ENCODE measurements at regions of chr3 and their contacts with region 1.

Region 1: GRCh38 chr3:185558395-185558794 is 6.0 kb upstream of the LIPH start:
- DNase-seq: no peak
- ATAC-seq: no peak
- H3K4me3 ChIP-seq: no peak overlapping the region
- H3K27ac ChIP-seq: no peak overlapping the region
- H3K4me1 ChIP-seq: no peaks in the 10 kb centered on the region
- H3K27me3 ChIP-seq: no peaks in the 10 kb centered on the region

Region 2: DNA sequence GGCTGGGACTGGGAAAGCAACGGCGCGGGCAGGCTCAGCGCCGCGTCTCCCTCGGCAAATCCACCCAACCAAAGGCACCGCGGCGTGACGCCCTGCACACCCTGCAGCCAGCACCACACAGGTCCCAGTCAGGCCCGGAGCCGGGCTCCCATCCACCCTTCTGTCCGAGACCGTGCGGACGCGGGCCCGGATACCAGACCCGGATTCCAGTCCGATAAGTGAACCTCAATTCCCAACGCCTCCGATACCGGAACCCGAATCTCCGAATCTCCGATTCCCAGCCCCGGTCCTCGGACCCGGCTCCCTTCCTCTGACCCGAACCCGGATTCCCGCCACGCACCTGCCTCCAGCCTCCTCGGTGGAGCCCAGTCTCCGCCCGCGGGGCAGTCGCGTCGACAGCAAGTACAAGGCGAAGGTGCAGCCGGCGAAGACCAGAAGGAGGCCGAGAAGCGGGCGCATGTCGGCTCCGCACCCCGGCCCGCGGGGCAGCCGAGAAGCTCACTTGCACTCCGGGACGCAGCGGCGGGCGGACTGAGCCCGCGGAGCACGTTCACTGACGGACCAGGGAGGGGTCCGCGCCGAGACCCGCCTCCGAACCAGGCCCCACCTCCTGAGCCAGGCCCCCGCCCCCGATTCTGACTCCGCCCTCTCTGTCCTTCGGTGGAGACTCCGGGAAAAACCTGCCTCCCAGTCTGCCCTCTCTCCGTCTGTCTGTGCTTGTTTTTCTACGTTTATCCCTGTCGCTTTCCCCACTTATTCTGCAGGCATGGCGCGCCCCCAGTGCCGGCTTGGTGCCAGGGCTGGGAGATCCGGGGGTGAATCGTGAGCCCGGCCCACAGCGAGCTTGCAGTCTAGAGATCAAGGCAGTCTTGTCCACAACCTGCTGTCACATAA is 59.6 kb before region 1 on chr3 and contains the start of gene TMEM41A:
- intact Hi-C with region 1: loop called in 1 of 2 experiments (anchors 5 kb)
- DNase-seq: peak; percentile 96 to 98
- ATAC-seq: peak; percentile 99
- H3K4me3 ChIP-seq: peak within 1 kb of the TSS; percentile 58 to 63
- H3K27ac ChIP-seq: peak within 1 kb of the TSS in 1 of 2 donors; percentile 30
- H3K4me1 ChIP-seq: no peaks in the 10 kb centered on the region
- H3K27me3 ChIP-seq: no peaks in the 10 kb centered on the region
- total RNA-seq, gene TMEM41A: 13.2 to 15.6 TPM